ENCODE measurements at regions of chr5 and their contacts with region 1.

Region 1: GRCh38 chr5:37308796-37309195 is 59.6 kb upstream of the CPLANE1 start:
- DNase-seq: no peak
- ATAC-seq: no peak
- H3K4me3 ChIP-seq: no peak overlapping the region
- H3K27ac ChIP-seq: no peak overlapping the region
- H3K4me1 ChIP-seq: no peaks in the 10 kb centered on the region
- H3K27me3 ChIP-seq: no peaks in the 10 kb centered on the region
- CTCF ChIP-seq: no peak

Region 2: DNA sequence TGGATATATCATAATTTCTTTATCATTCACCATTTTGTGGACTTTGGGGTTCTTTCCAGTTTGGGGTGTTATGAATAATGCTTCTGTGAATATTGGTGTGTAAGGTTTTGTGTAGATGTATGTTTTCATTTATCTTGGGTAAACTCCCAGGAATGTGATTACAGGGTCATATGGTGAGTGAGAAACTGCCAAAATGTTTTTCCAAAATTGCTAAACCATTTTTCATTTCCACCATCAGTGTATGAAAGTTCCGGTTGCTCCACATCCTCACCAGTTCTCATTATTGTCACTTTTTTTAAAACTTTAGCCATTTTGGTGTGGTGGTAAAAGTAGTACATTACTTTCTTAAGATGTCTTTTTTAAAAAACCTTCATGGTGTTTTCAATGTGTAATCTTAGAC is 279.4 kb before region 1 on chr5:
- intact Hi-C with region 1: loop called in 1 of 10 experiments (anchors 10 kb)
- DNase-seq: no peak
- ATAC-seq: no peak
- H3K4me3 ChIP-seq: no peak overlapping the region
- H3K27ac ChIP-seq: no peak overlapping the region
- H3K4me1 ChIP-seq: no peaks in the 10 kb centered on the region
- H3K27me3 ChIP-seq: no peaks in the 10 kb centered on the region
- CTCF ChIP-seq: no peak

Measured in heart right ventricle (tissue), 16 donors.